B cell (primary cell): ENCODE measurements at regions of chr19 and their contacts with region 1.

Region 1: GRCh38 chr19:6530386-6531161 is at the start of gene TNFSF9:
- DNase-seq: peak; percentile 88
- ATAC-seq: peak; percentile 34
- H3K4me3 ChIP-seq: peak within 1 kb of the TSS in 4 of 5 experiments; percentile 50 to 66 (median 60)
- H3K4me3 Mint-ChIP-seq: peak within 1 kb of the TSS; percentile 87
- H3K27ac ChIP-seq: peak within 1 kb of the TSS in 1 of 2 donors; percentile 54
- H3K27ac Mint-ChIP-seq: peak within 1 kb of the TSS; percentile 82
- H3K4me1 ChIP-seq: peaks cover 42 to 64% of the 10 kb centered on the region in 2 donors
- H3K4me1 Mint-ChIP-seq: peaks cover 57% of the 10 kb centered on the region
- H3K27me3 ChIP-seq: peaks cover 0 to 17% (median 7%) of the 10 kb centered on the region in 4 experiments
- H3K27me3 Mint-ChIP-seq: peaks cover 11% of the 10 kb centered on the region
- CTCF ChIP-seq: no peak
- total RNA-seq, gene TNFSF9: 11.7 TPM in 2 replicates

Region 2: DNA sequence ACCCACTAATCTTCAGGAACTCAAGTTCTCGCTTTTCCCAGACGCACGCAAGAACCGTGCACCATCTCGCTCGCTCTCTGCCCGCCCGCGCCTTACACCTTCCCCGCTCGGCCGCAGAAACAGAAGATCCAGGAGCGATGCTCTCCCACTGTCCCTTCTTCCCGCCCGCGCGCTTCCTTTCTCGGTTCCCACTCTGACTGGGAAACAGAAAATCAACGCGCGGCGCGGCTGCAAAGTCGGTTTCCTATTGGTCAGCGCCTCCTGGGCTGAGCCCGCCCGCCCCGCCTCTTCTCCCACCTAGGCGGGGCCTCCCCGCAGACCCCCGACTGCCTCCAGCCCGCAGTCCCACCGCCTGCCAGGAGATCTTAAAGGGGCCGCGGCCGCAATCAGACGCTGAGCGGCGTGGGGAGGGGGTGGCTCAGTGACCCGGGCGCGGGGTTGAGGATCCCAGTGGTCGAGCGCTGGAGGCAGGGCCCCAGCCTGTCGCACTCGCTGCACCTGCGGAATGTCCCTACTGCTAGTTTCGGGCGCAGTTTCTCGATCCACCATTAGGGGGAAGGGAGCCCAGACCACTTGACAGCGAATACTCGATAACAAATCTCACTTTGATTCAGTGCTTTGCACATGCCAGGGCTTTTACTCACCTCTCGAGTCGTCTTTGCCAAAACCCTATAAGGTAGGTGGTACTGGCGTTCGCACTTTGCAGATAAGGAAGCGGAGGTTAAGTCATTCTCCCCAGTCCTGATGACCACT is 70.3 kb before region 1 on chr19:
- CTCF ChIA-PET with region 1: no interaction called
- POLR2A ChIA-PET with region 1: no interaction called
- intact Hi-C with region 1: no loop called
- DNase-seq: peak; percentile 99
- ATAC-seq: peak; percentile 84
- H3K4me3 ChIP-seq: peak overlapping the region; percentile 60 to 93 (median 78)
- H3K4me3 Mint-ChIP-seq: peak overlapping the region; percentile 91
- H3K27ac ChIP-seq: peak overlapping the region; percentile 76 to 86
- H3K27ac Mint-ChIP-seq: peak overlapping the region; percentile 78
- H3K4me1 ChIP-seq: peaks cover 11 to 34% of the 10 kb centered on the region in 2 donors
- H3K4me1 Mint-ChIP-seq: peaks cover 32% of the 10 kb centered on the region
- H3K27me3 ChIP-seq: peaks cover 0 to 15% (median 6%) of the 10 kb centered on the region in 4 experiments
- H3K27me3 Mint-ChIP-seq: no peaks in the 10 kb centered on the region
- CTCF ChIP-seq: peak; percentile 78

Region 3: GRCh38 chr19:6501740-6502648 is 28.6 kb before region 1 on chr19 and contains the start of gene TUBB4A:
- CTCF ChIA-PET with region 1: interaction called, 4 read pairs
- POLR2A ChIA-PET with region 1: interaction called, 13 read pairs
- intact Hi-C with region 1: no loop called
- DNase-seq: peak; percentile 68
- ATAC-seq: peak; percentile 83
- H3K4me3 ChIP-seq: peak within 1 kb of the TSS in 4 of 5 experiments; percentile 47 to 67 (median 59)
- H3K4me3 Mint-ChIP-seq: peak within 1 kb of the TSS; percentile 92
- H3K27ac ChIP-seq: no peak within 1 kb of the TSS
- H3K27ac Mint-ChIP-seq: peak within 1 kb of the TSS; percentile 78
- H3K4me1 ChIP-seq: peaks cover 16 to 21% of the 10 kb centered on the region in 2 donors
- H3K4me1 Mint-ChIP-seq: peaks cover 18% of the 10 kb centered on the region
- H3K27me3 ChIP-seq: peaks cover 0 to 17% (median 3%) of the 10 kb centered on the region in 4 experiments
- H3K27me3 Mint-ChIP-seq: peaks cover 3% of the 10 kb centered on the region
- CTCF ChIP-seq: peak; percentile 13
- total RNA-seq, gene TUBB4A: 21.9 and 22.1 TPM in 2 replicates

Region 4: GRCh38 chr19:6577476-6578125 is 47.0 kb after region 1 on chr19:
- CTCF ChIA-PET with region 1: interaction called, 3 read pairs
- POLR2A ChIA-PET with region 1: interaction called, 11 read pairs
- intact Hi-C with region 1: loop called (anchors 2 kb)
- DNase-seq: peak; percentile 88
- ATAC-seq: peak; percentile 85
- H3K4me3 ChIP-seq: peak overlapping the region in 1 of 5 experiments; percentile 3
- H3K4me3 Mint-ChIP-seq: no peak overlapping the region
- H3K27ac ChIP-seq: peak overlapping the region; percentile 68 to 78
- H3K27ac Mint-ChIP-seq: no peak overlapping the region
- H3K4me1 ChIP-seq: peaks cover 16 to 28% of the 10 kb centered on the region in 2 donors
- H3K4me1 Mint-ChIP-seq: peaks cover 21% of the 10 kb centered on the region
- H3K27me3 ChIP-seq: peaks cover 0 to 5% (median 0%) of the 10 kb centered on the region in 4 experiments
- H3K27me3 Mint-ChIP-seq: no peaks in the 10 kb centered on the region
- CTCF ChIP-seq: no peak